ENCODE measurements at regions of chr1 and their contacts with region 1.

Region 1: GRCh38 chr1:77739235-77739634 is 20.4 kb downstream of the USP33 start:
- DNase-seq: no peak
- ATAC-seq: no peak
- H3K4me3 Mint-ChIP-seq: no peak overlapping the region
- H3K27ac Mint-ChIP-seq: no peak overlapping the region
- H3K4me1 Mint-ChIP-seq: peaks cover 2% of the 10 kb centered on the region
- H3K27me3 Mint-ChIP-seq: no peaks in the 10 kb centered on the region
- CTCF ChIP-seq: no peak

Region 2: DNA sequence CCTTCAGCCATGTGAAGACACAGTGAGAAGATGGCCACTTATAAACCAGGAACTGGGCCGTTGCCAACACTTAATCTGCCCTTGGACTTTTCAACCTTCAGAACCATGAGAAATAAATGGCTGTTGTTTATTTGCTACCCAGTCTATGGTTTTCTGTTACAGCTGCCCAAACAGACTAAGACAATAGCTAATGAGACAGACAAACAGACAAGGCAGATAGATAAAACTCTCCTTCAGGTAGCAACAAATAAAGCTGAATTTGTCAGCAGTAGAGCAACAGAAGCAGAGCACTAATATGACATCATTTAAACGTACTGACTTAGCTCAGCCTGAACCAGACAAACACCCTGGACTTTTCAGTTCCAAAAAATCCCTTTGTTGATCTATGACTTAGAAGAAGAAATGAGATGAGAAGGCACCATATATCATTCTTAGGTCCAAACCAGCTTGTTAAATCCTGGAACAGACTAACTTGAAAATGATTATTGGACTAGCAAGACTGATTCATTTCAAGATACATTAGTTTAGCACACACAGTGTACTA is 83.7 kb before region 1 on chr1:
- CTCF ChIA-PET with region 1: no interaction called
- POLR2A ChIA-PET with region 1: no interaction called
- intact Hi-C with region 1: no loop called
- DNase-seq: no peak
- ATAC-seq: no peak
- H3K4me3 Mint-ChIP-seq: no peak overlapping the region
- H3K27ac Mint-ChIP-seq: no peak overlapping the region
- H3K4me1 Mint-ChIP-seq: peaks cover 35% of the 10 kb centered on the region
- H3K27me3 Mint-ChIP-seq: no peaks in the 10 kb centered on the region
- CTCF ChIP-seq: no peak

Region 3: GRCh38 chr1:77704736-77705135 is 34.5 kb before region 1 on chr1:
- CTCF ChIA-PET with region 1: no interaction called
- POLR2A ChIA-PET with region 1: interaction called, 3 read pairs
- intact Hi-C with region 1: loop called (anchors 5 kb)
- DNase-seq: no peak
- ATAC-seq: no peak
- H3K4me3 Mint-ChIP-seq: no peak overlapping the region
- H3K27ac Mint-ChIP-seq: no peak overlapping the region
- H3K4me1 Mint-ChIP-seq: no peaks in the 10 kb centered on the region
- H3K27me3 Mint-ChIP-seq: no peaks in the 10 kb centered on the region
- CTCF ChIP-seq: no peak

Region 4: GRCh38 chr1:77716065-77716464 is 23.2 kb before region 1 on chr1:
- CTCF ChIA-PET with region 1: no interaction called
- POLR2A ChIA-PET with region 1: no interaction called
- intact Hi-C with region 1: no loop called
- DNase-seq: no peak
- ATAC-seq: no peak
- H3K4me3 Mint-ChIP-seq: no peak overlapping the region
- H3K27ac Mint-ChIP-seq: no peak overlapping the region
- H3K4me1 Mint-ChIP-seq: no peaks in the 10 kb centered on the region
- H3K27me3 Mint-ChIP-seq: no peaks in the 10 kb centered on the region
- CTCF ChIP-seq: no peak